ENCODE measurements at regions of chr4 and their contacts with region 1.

Region 1: GRCh38 chr4:140308366-140309123 is 64.9 kb upstream of the SCOC start:
- DNase-seq: peak; percentile 92

Region 2: DNA sequence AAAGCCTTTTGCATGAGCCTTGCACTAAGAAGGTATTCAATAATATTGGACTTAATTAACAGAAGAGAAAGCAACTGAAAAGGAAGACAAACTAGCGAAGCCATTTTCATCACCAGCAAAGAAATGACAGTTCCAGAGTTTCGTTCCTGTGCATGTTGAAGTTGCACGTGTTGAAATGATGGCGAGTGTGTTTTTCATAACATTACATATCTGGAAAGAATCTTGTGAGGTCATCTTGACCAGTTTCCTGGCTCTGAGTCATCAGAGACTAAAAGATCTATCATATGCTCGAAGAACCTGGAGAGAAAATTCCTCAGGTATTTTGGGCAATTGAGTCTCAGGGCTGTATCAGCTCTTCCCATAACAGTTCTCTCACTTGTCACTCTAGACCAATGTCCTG is 48.3 kb before region 1 on chr4:
- intact Hi-C with region 1: loop called in 1 of 2 experiments (anchors 5 kb)
- DNase-seq: no peak